Transverse colon (tissue), 4 donors: ENCODE measurements at regions of chr19 and their contacts with region 1.

Region 1: GRCh38 chr19:4732680-4733114 is 9.1 kb upstream of the DPP9 start:
- DNase-seq: peak; percentile 45
- H3K4me3 ChIP-seq: no peak overlapping the region
- H3K27ac ChIP-seq: no peak overlapping the region
- H3K4me1 ChIP-seq: peaks cover 0 to 6% (median 2%) of the 10 kb centered on the region in 4 donors
- H3K27me3 ChIP-seq: peaks cover 23% of the 10 kb centered on the region
- CTCF ChIP-seq: peak; percentile 62 to 82 (median 77)
- EP300 ChIP-seq: no peak
- POLR2A ChIP-seq: no peak

Region 2: GRCh38 chr19:4624733-4625362 is 107.8 kb before region 1 on chr19:
- in situ Hi-C with region 1: no loop called
- intact Hi-C with region 1: no loop called
- DNase-seq: no peak
- H3K4me3 ChIP-seq: no peak overlapping the region
- H3K27ac ChIP-seq: no peak overlapping the region
- H3K4me1 ChIP-seq: no peaks in the 10 kb centered on the region
- H3K27me3 ChIP-seq: peaks cover 36% of the 10 kb centered on the region
- CTCF ChIP-seq: no peak
- EP300 ChIP-seq: no peak
- POLR2A ChIP-seq: no peak

Region 3: DNA sequence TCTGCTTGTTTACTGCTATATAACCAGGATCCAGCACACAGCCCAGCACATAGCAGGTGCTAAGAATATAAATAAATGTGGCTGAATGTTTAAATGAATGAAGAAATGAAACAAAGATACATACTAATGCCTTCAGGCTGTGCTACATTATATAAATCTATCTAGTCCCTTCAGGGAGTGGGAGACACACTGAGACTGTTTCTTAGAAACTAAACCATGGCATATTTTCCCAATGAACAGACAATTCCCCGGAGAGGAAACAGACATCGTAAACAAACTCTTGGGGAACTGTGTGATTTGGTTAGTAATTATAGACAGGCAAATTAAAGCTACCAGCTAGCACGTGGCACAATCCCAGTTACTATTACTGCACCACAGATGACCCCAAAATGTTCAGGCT is 49.1 kb after region 1 on chr19:
- in situ Hi-C with region 1: loop called in 3 of 4 experiments (anchors 5 to 10 kb)
- intact Hi-C with region 1: no loop called
- DNase-seq: no peak
- H3K4me3 ChIP-seq: no peak overlapping the region
- H3K27ac ChIP-seq: no peak overlapping the region
- H3K4me1 ChIP-seq: no peaks in the 10 kb centered on the region
- H3K27me3 ChIP-seq: peaks cover 27% of the 10 kb centered on the region
- CTCF ChIP-seq: no peak
- EP300 ChIP-seq: no peak
- POLR2A ChIP-seq: no peak

Region 4: DNA sequence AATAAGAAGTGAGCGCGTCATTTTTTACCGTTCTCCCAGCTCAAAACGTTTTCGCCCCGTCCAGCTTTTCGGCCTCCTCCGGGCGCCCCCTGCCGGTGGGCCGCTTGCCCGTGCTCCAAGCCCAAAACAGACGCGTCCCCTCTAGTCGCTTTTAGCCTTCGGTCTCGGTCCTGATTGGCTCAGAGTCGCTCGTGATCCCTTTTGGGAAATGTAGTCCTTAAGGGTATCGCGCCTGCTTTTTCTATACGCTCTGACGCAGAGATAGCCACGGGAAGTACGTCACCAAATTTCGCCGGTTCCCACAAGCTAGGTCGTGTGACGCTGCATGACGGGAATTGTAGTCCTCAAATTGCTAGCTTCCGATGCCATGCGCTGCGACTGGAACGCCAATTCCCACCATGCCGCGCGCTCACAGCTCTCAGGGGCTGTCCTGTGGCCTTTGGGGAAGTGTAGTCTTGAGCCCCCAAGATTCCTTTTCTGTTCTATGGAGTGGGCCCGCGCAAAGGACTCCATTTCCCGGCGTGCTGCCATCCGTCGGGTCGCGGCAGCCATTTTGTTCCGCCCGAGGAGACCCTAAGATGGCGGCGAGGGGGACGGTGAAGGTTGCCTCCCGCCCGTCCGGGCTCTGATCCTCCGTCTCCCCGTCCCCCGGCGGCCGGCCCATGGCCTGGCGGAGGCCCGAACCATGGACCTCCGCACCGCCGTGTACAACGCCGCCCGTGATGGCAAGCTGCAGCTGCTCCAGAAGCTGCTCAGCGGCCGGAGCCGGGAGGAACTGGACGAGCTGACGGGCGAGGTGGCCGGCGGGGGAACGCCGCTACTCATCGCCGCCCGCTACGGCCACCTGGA is 58.7 kb after region 1 on chr19 and contains the start of gene FEM1A:
- in situ Hi-C with region 1: loop called (anchors 5 to 10 kb)
- intact Hi-C with region 1: no loop called
- DNase-seq: peak; percentile 100
- H3K4me3 ChIP-seq: peak within 1 kb of the TSS; percentile 63 to 89 (median 85)
- H3K27ac ChIP-seq: peak within 1 kb of the TSS; percentile 84 to 94 (median 94)
- H3K4me1 ChIP-seq: peaks cover 13 to 39% (median 21%) of the 10 kb centered on the region in 4 donors
- H3K27me3 ChIP-seq: no peaks in the 10 kb centered on the region
- CTCF ChIP-seq: peak; percentile 97 to 100 (median 98)
- EP300 ChIP-seq: peak; percentile 91
- POLR2A ChIP-seq: peak; percentile 73
- total RNA-seq, gene FEM1A: 13.3 to 63.5 (median 15.5) TPM

Region 5: DNA sequence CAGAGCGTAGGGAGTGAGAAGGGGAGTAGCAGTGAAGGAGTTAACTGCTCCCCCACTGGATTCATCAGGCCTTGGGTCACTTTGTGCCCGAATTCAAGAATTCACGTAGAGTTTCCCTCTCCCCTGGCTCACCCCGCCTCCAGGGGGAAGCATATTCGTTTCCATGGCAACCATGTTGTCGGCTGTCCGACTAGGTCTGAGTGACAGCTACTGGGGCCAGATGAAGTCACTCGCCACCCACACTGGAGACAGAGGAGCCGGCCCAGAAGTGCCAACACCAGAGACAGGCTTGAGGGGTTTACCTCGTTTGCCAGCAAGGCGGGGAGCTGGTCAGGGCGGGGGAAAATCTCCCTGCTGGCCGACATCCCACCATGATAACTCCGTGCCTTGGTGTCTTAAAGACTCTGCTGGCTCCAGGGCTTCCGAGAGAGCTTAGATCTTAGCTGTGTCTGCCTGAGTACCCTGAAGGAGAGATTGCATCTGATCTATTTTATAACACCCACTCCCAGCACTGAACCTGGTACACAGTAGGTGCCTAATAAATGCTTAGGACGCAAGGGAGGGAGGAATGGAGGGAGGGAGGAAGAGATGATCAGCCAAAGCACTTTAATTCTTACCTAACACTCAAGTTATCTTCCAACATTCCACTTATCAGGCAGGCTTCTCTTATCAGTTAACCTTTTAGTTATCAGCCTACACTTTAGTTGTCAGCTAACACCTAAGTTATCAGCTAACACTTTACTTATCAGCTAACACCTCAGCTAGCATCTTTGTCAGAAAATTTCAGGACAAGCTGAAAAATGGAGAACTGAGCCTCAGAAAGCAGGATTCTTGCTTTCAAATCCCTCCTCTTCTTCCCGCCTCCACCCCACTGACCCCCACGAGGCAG is 665.4 kb after region 1 on chr19:
- in situ Hi-C with region 1: no loop called
- intact Hi-C with region 1: no loop called
- DNase-seq: no peak
- H3K4me3 ChIP-seq: no peak overlapping the region
- H3K27ac ChIP-seq: no peak overlapping the region
- H3K4me1 ChIP-seq: no peaks in the 10 kb centered on the region
- H3K27me3 ChIP-seq: peaks cover 60% of the 10 kb centered on the region
- CTCF ChIP-seq: no peak
- EP300 ChIP-seq: no peak
- POLR2A ChIP-seq: no peak